A549 (cell line): ENCODE measurements at regions of chr11 and their contacts with region 1.

Region 1: DNA sequence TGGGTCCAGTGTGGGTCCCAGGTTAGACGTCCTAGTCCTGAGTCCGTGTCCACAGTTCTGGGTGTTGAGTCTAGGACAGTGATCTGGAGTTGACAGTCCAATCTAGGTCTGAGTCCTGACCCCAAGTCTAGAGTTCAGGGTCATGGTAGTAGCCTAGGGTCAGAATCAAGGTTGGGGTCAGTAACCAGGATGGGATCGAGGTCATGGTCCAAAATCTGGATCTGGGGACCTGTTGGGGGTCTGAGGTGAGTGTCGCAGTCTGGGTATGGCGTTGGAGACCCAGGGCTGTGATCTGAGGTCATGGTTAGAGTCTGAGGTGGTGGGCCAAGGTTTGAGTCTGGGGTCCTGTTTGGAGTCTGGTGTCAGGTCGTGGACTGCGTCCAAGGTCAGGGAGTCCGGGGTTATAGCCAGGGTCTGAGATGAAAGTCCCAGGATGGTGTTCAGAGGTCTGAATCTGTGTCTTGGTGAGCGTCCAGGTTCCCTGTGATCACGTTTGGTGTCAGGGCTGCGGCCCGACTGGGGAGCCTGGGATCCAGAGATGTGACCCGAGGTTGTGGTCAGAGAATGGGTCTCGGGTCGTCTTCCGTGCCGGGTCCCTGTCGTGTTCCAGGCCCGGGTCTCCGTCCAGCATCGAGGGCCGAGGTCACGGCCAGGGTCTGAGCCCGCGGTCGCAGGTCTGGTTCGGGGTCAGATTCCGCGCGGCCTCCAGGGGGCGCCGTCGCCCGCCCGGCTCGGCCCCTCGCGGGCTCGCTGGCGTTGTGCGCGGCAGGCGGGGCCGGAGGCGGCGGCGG is 445 bp upstream of the GRK2 start:
- DNase-seq: peak; percentile 55 to 76
- ATAC-seq: peak; percentile 60 to 69
- H3K4me3 ChIP-seq: peak overlapping the region; percentile 89; the same call in 2 of the 3 replicates
- H3K27ac ChIP-seq: peak overlapping the region; percentile 92 to 100; a peak in 5 of 6 replicates
- H3K4me1 ChIP-seq: peaks cover 40% of the 10 kb centered on the region
- CTCF ChIP-seq: peak; percentile 79
- EP300 ChIP-seq: no peak
- POLR2A ChIP-seq: no peak
- RAD21 ChIP-seq: peak; percentile 51 to 52; a peak in 3 of 5 replicates

Region 2: GRCh38 chr11:67053896-67054842 is 211.7 kb before region 1 on chr11:
- CTCF ChIA-PET with region 1: interaction called, 16 read pairs
- POLR2A ChIA-PET with region 1: no interaction called
- DNase-seq: peak; percentile 80 to 98
- ATAC-seq: peak; percentile 64 to 82
- H3K4me3 ChIP-seq: no peak overlapping the region
- H3K27ac ChIP-seq: peak overlapping the region; percentile 75 to 91
- H3K4me1 ChIP-seq: peaks cover 44% of the 10 kb centered on the region
- CTCF ChIP-seq: peak; percentile 81
- EP300 ChIP-seq: no peak
- POLR2A ChIP-seq: no peak
- RAD21 ChIP-seq: peak; percentile 84 to 85

Region 3: GRCh38 chr11:67245021-67245420 is 20.8 kb before region 1 on chr11:
- CTCF ChIA-PET with region 1: interaction called, 90 read pairs
- POLR2A ChIA-PET with region 1: interaction called, 6 read pairs
- DNase-seq: no peak
- ATAC-seq: no peak
- H3K4me3 ChIP-seq: no peak overlapping the region
- H3K27ac ChIP-seq: no peak overlapping the region
- H3K4me1 ChIP-seq: peaks cover 20% of the 10 kb centered on the region; the same call in 2 of the 3 replicates
- CTCF ChIP-seq: no peak
- EP300 ChIP-seq: no peak
- POLR2A ChIP-seq: no peak
- RAD21 ChIP-seq: no peak

Region 4: DNA sequence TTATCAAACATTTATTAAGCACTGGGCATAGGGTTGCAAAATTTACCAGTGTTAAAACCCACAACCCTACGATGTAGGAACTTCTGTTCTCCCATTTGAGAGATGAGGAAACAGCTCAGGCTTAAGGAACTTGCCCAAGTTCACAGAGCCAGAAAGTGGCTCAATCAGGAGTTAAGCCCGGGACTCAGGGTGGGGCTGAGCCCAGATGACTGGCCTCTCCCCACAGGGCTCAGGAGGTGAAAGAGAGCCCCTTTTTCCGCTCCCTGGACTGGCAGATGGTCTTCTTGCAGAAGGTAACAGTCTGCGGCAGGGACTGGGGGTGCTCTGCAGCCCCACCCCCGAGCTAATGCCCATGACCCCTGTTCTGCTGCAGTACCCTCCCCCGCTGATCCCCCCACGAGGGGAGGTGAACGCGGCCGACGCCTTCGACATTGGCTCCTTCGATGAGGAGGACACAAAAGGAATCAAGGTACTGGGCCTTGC is 17.7 kb after region 1 on chr11:
- CTCF ChIA-PET with region 1: interaction called, 27 read pairs
- POLR2A ChIA-PET with region 1: interaction called, 5 read pairs
- DNase-seq: no peak
- ATAC-seq: no peak
- H3K4me3 ChIP-seq: no peak overlapping the region
- H3K27ac ChIP-seq: no peak overlapping the region
- H3K4me1 ChIP-seq: peaks cover 10% of the 10 kb centered on the region; the same call in 2 of the 3 replicates
- CTCF ChIP-seq: no peak
- EP300 ChIP-seq: no peak
- POLR2A ChIP-seq: no peak
- RAD21 ChIP-seq: no peak

Region 5: GRCh38 chr11:67303132-67303834 is 37.5 kb after region 1 on chr11 and contains the start of gene SSH3:
- CTCF ChIA-PET with region 1: interaction called, 41 read pairs
- POLR2A ChIA-PET with region 1: no interaction called
- DNase-seq: peak; percentile 71 to 74
- ATAC-seq: peak; percentile 85 to 91
- H3K4me3 ChIP-seq: peak within 1 kb of the TSS; percentile 93
- H3K27ac ChIP-seq: peak within 1 kb of the TSS; percentile 93 to 94
- H3K4me1 ChIP-seq: peaks cover 22% of the 10 kb centered on the region; the same call in 2 of the 3 replicates
- CTCF ChIP-seq: no peak
- EP300 ChIP-seq: no peak
- POLR2A ChIP-seq: peak; percentile 65
- RAD21 ChIP-seq: no peak
- polyA plus RNA-seq, gene SSH3: 13.7 and 13.9 TPM in 2 replicates

Region 6: GRCh38 chr11:67353317-67354074 is 87.7 kb after region 1 on chr11 and contains the start of gene POLD4:
- CTCF ChIA-PET with region 1: interaction called, 23 read pairs
- POLR2A ChIA-PET with region 1: interaction called, 3 read pairs
- DNase-seq: peak; percentile 95 to 97
- ATAC-seq: peak; percentile 46 to 74
- H3K4me3 ChIP-seq: peak within 1 kb of the TSS; percentile 69
- H3K27ac ChIP-seq: peak within 1 kb of the TSS; percentile 93 to 98
- H3K4me1 ChIP-seq: peaks cover 87% of the 10 kb centered on the region
- CTCF ChIP-seq: no peak
- EP300 ChIP-seq: no peak
- POLR2A ChIP-seq: peak; percentile 30; the same call in 1 of the 2 replicates
- RAD21 ChIP-seq: no peak
- polyA plus RNA-seq, gene POLD4: 140 and 157 TPM in 2 replicates